Endothelial cell of umbilical vein (primary cell): ENCODE measurements at regions of chr11 and their contacts with region 1.

Region 1: DNA sequence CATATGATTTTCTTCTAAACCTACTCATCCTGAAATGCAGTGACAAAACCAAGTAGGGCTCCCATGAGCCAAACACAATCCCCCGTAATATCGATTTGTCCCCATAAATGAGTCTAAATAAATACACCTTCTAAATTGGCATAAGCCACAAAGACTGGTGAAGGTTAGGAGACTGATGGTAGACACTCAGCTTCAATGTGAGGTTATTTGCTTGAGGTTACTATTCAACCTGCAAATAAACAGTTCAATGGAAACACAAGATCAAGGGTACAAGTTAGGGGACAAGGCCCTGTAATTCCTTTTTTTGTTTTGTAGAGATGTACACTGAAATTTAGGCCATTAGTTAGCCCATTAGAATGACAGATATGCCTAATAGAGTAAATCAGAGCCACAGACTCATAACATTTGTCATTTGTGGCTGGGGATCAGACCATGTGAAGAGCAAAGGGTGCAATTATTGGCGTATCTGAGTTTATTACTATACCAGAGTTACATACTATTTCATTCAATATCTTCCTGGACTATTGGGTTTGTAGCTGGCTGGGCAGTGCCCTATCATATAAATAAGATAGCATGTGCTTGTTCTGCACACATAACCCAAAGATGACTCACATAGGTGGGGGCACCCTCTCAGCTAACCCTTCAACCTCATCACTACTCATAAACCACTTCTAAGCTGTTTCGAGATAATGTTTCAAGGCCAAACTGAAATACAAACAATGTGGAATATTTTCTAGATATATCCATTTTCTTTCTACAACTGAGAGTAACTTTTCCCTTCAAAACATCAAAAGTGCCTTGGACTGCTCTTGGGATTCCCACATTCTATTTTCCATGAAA is 695.3 kb downstream of the KCNA4 start:
- DNase-seq: no peak
- H3K4me3 ChIP-seq: no peak overlapping the region
- H3K27ac ChIP-seq: no peak overlapping the region
- H3K4me1 ChIP-seq: peaks cover 7% of the 10 kb centered on the region
- H3K27me3 ChIP-seq: no peaks in the 10 kb centered on the region
- CTCF ChIP-seq: no peak
- POLR2A ChIP-seq: no peak

Region 2: GRCh38 chr11:29210426-29210825 is 111.1 kb before region 1 on chr11:
- CTCF ChIA-PET with region 1: no interaction called
- POLR2A ChIA-PET with region 1: no interaction called
- dilution Hi-C with region 1: no loop called
- intact Hi-C with region 1: loop called (anchors 1 kb)
- DNase-seq: no peak
- H3K4me3 ChIP-seq: no peak overlapping the region
- H3K27ac ChIP-seq: no peak overlapping the region
- H3K4me1 ChIP-seq: no peaks in the 10 kb centered on the region
- H3K27me3 ChIP-seq: no peaks in the 10 kb centered on the region
- CTCF ChIP-seq: no peak
- POLR2A ChIP-seq: no peak

Region 3: DNA sequence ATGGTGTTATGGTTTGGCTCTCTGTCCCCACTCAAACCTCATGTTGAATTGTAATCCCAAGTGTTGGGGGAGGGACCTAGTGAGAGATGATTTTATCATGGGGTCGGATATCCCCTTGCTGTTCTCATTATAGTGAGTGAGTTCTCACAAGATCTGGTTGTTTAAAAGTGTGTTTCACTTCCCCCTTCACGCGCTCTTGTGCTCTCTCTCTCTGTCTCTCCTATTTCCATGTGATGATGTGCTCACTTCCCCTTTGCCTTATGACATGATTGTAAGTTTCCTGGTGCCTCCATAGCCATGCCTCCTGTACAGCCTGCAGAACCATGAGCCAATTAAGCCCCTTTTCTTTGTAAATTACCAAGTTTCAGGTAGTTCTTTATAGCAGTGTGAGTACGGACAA is 69.8 kb before region 1 on chr11:
- CTCF ChIA-PET with region 1: no interaction called
- POLR2A ChIA-PET with region 1: no interaction called
- dilution Hi-C with region 1: no loop called
- intact Hi-C with region 1: no loop called
- DNase-seq: no peak
- H3K4me3 ChIP-seq: no peak overlapping the region
- H3K27ac ChIP-seq: no peak overlapping the region
- H3K4me1 ChIP-seq: no peaks in the 10 kb centered on the region
- H3K27me3 ChIP-seq: no peaks in the 10 kb centered on the region
- CTCF ChIP-seq: no peak
- POLR2A ChIP-seq: no peak

Region 4: GRCh38 chr11:29272019-29272654 is 49.4 kb before region 1 on chr11:
- CTCF ChIA-PET with region 1: interaction called, 15 read pairs
- POLR2A ChIA-PET with region 1: no interaction called
- dilution Hi-C with region 1: no loop called
- intact Hi-C with region 1: no loop called
- DNase-seq: peak; percentile 59
- H3K4me3 ChIP-seq: no peak overlapping the region
- H3K27ac ChIP-seq: no peak overlapping the region
- H3K4me1 ChIP-seq: no peaks in the 10 kb centered on the region
- H3K27me3 ChIP-seq: no peaks in the 10 kb centered on the region
- CTCF ChIP-seq: peak in 1 of 2 donors; percentile 54
- POLR2A ChIP-seq: no peak